ENCODE measurements at regions of chr2 and their contacts with region 1.

Region 1: GRCh38 chr2:100242891-100243619 is 79.2 kb downstream of the LONRF2 start:
- DNase-seq: peak in 7 of 9 experiments; percentile 6 to 59 (median 41)
- ATAC-seq: no peak
- H3K4me3 ChIP-seq: no peak overlapping the region
- H3K4me3 Mint-ChIP-seq: no peak overlapping the region
- H3K27ac ChIP-seq: no peak overlapping the region
- H3K27ac Mint-ChIP-seq: no peak overlapping the region
- H3K4me1 ChIP-seq: no peaks in the 10 kb centered on the region
- H3K4me1 Mint-ChIP-seq: peaks cover 2% of the 10 kb centered on the region
- H3K27me3 ChIP-seq: no peaks in the 10 kb centered on the region
- H3K27me3 Mint-ChIP-seq: peaks cover 7% of the 10 kb centered on the region
- CTCF ChIP-seq: peak; percentile 50

Region 2: GRCh38 chr2:99818842-99819241 is 424.2 kb before region 1 on chr2:
- CTCF ChIA-PET with region 1: interaction called, 5 read pairs
- POLR2A ChIA-PET with region 1: no interaction called
- intact Hi-C with region 1: loop called in 1 of 2 experiments (anchors 2 kb)
- DNase-seq: peak in 1 of 9 experiments; percentile 16
- ATAC-seq: no peak
- H3K4me3 ChIP-seq: no peak overlapping the region
- H3K4me3 Mint-ChIP-seq: no peak overlapping the region
- H3K27ac ChIP-seq: no peak overlapping the region
- H3K27ac Mint-ChIP-seq: no peak overlapping the region
- H3K4me1 ChIP-seq: no peaks in the 10 kb centered on the region
- H3K4me1 Mint-ChIP-seq: no peaks in the 10 kb centered on the region
- H3K27me3 ChIP-seq: no peaks in the 10 kb centered on the region
- H3K27me3 Mint-ChIP-seq: no peaks in the 10 kb centered on the region
- CTCF ChIP-seq: no peak